ENCODE measurements at regions of chr5 and their contacts with region 1.

Region 1: GRCh38 chr5:54243473-54244080 is 66.8 kb downstream of the ARL15 start:
- DNase-seq: no peak
- H3K4me3 ChIP-seq: no peak overlapping the region
- H3K27ac ChIP-seq: no peak overlapping the region
- H3K4me1 ChIP-seq: no peaks in the 10 kb centered on the region
- H3K27me3 ChIP-seq: no peaks in the 10 kb centered on the region
- CTCF ChIP-seq: peak in 2 of 3 experiments; percentile 64 to 66; a peak in 3 of 4 replicates
- EP300 ChIP-seq: no peak
- POLR2A ChIP-seq: no peak
- RAD21 ChIP-seq: peak; percentile 85 to 86

Region 2: DNA sequence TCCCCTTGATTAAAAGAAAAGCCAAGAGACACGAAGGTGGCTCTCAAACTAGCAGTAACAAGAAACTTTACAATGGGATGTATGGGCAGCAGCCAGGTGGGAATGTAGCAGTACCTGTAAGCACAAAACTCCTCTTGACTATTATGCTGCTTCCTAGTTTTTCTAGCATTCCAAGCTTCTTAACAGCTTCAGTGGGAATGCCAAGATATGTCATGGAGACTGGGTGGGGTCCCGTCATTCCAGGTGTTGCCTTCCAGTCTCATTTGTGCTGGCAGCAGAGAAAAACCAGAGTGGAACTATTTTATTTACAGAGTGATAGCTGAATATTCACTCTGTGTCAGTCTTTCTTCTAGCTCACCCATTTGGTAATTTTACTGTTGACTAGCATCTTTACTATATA is 169.8 kb before region 1 on chr5:
- CTCF ChIA-PET with region 1: no interaction called
- POLR2A ChIA-PET with region 1: no interaction called
- DNase-seq: no peak
- H3K4me3 ChIP-seq: no peak overlapping the region
- H3K27ac ChIP-seq: no peak overlapping the region
- H3K4me1 ChIP-seq: no peaks in the 10 kb centered on the region; a peak in 1 of 7 replicates
- H3K27me3 ChIP-seq: no peaks in the 10 kb centered on the region
- CTCF ChIP-seq: no peak
- EP300 ChIP-seq: no peak
- POLR2A ChIP-seq: no peak
- RAD21 ChIP-seq: no peak

Region 3: GRCh38 chr5:54148067-54148466 is 95.5 kb before region 1 on chr5:
- CTCF ChIA-PET with region 1: no interaction called
- POLR2A ChIA-PET with region 1: no interaction called
- DNase-seq: no peak
- H3K4me3 ChIP-seq: no peak overlapping the region
- H3K27ac ChIP-seq: no peak overlapping the region
- H3K4me1 ChIP-seq: no peaks in the 10 kb centered on the region
- H3K27me3 ChIP-seq: no peaks in the 10 kb centered on the region
- CTCF ChIP-seq: no peak
- EP300 ChIP-seq: no peak
- POLR2A ChIP-seq: no peak
- RAD21 ChIP-seq: no peak

Region 4: DNA sequence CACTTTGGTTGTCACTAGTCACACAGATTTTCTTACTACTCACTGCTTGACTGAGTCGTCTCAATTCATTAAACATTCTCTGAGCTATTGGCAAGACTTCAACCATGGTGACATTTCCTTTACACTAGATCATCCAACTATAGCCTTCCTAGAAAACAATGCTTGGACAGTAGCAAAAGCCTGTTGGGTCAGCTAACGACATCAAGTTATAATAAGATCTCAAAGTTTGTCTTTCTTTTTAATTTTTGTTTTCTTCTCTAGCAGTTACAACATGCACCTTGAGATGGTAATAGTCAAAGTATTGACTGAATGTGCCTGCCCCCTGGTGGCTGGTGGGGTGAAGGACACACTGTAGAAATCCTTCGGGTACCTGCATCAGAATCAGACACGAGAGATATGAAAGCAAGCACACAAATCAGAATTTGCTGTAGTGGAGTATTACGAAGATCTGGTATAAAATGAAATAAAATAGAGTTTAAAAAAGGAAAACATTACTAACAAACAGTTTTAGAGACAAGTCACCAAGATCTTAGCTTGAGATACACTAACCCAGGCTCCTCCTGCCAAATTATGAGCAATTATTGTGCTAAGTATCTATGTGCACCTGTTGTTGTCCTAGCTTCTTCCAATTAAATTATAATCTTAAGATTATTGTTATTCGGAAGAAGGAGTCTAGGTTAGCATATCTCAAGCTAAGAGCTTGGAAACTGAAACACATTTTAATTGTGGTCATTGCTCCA is 14.4 kb before region 1 on chr5:
- CTCF ChIA-PET with region 1: interaction called, 14 read pairs
- POLR2A ChIA-PET with region 1: no interaction called
- DNase-seq: peak in 1 of 2 experiments; percentile 86
- H3K4me3 ChIP-seq: no peak overlapping the region
- H3K27ac ChIP-seq: no peak overlapping the region
- H3K4me1 ChIP-seq: no peaks in the 10 kb centered on the region
- H3K27me3 ChIP-seq: no peaks in the 10 kb centered on the region
- CTCF ChIP-seq: peak; percentile 71 to 80 (median 79)
- EP300 ChIP-seq: no peak
- POLR2A ChIP-seq: no peak
- RAD21 ChIP-seq: peak; percentile 80

Region 5: GRCh38 chr5:54254482-54255198 is 11.1 kb after region 1 on chr5:
- CTCF ChIA-PET with region 1: interaction called, 14 read pairs
- POLR2A ChIA-PET with region 1: interaction called, 3 read pairs
- DNase-seq: no peak
- H3K4me3 ChIP-seq: no peak overlapping the region
- H3K27ac ChIP-seq: no peak overlapping the region
- H3K4me1 ChIP-seq: no peaks in the 10 kb centered on the region; a peak in 1 of 7 replicates
- H3K27me3 ChIP-seq: no peaks in the 10 kb centered on the region
- CTCF ChIP-seq: peak in 2 of 3 experiments; percentile 36 to 48; a peak in 2 of 4 replicates
- EP300 ChIP-seq: no peak
- POLR2A ChIP-seq: no peak
- RAD21 ChIP-seq: peak; percentile 66 to 71

Region 6: GRCh38 chr5:54289777-54290176 is 46.2 kb after region 1 on chr5:
- CTCF ChIA-PET with region 1: no interaction called
- POLR2A ChIA-PET with region 1: no interaction called
- DNase-seq: no peak
- H3K4me3 ChIP-seq: no peak overlapping the region
- H3K27ac ChIP-seq: no peak overlapping the region
- H3K4me1 ChIP-seq: peaks cover 0 to 8% (median 3%) of the 10 kb centered on the region in 4 experiments; a peak in 5 of 7 replicates
- H3K27me3 ChIP-seq: no peaks in the 10 kb centered on the region
- CTCF ChIP-seq: no peak
- EP300 ChIP-seq: no peak
- POLR2A ChIP-seq: no peak
- RAD21 ChIP-seq: no peak

Region 7: DNA sequence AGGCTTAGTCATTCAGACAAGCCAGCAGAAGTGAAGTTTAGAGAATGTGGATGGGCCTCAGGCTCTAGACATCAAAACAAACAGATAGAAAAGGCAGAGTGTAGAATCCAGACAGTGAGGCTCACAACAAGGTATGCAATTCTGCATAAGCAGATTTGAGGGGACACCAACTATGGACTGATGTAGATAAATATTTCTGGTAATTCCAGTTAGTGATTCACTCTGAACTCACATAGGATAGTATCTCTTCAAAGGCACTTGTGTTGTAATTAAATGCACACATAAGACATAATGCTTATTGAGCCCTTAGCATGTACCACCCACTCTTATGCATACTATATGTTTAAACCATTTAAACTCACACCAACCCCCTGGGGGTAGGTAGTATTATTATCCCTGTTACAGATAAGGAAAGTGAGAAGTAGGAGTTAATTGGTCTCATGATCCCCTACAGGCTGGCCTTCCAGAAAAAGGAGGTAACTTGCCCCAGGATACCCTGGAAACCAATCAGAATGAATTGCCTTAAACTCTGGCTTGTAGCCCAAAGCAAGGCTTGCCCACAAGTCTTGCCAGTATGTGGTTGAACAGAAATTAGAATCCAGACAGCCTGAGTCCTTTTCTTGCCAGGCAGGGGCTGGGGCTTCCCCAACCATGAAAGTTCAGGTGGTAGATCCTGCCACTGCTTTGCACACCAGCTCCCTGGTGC is 172.5 kb after region 1 on chr5:
- CTCF ChIA-PET with region 1: interaction called, 17 read pairs
- POLR2A ChIA-PET with region 1: interaction called, 4 read pairs
- DNase-seq: no peak
- H3K4me3 ChIP-seq: no peak overlapping the region
- H3K27ac ChIP-seq: no peak overlapping the region
- H3K4me1 ChIP-seq: no peaks in the 10 kb centered on the region
- H3K27me3 ChIP-seq: no peaks in the 10 kb centered on the region
- CTCF ChIP-seq: no peak
- EP300 ChIP-seq: no peak
- POLR2A ChIP-seq: no peak
- RAD21 ChIP-seq: no peak

Region 8: GRCh38 chr5:54443270-54443669 is 199.7 kb after region 1 on chr5:
- CTCF ChIA-PET with region 1: interaction called, 11 read pairs
- POLR2A ChIA-PET with region 1: no interaction called
- DNase-seq: no peak
- H3K4me3 ChIP-seq: no peak overlapping the region
- H3K27ac ChIP-seq: no peak overlapping the region
- H3K4me1 ChIP-seq: no peaks in the 10 kb centered on the region
- H3K27me3 ChIP-seq: no peaks in the 10 kb centered on the region
- CTCF ChIP-seq: peak in 2 of 3 experiments; percentile 47 to 58; a peak in 2 of 4 replicates
- EP300 ChIP-seq: no peak
- POLR2A ChIP-seq: no peak
- RAD21 ChIP-seq: peak; percentile 49 to 55

Region 9: DNA sequence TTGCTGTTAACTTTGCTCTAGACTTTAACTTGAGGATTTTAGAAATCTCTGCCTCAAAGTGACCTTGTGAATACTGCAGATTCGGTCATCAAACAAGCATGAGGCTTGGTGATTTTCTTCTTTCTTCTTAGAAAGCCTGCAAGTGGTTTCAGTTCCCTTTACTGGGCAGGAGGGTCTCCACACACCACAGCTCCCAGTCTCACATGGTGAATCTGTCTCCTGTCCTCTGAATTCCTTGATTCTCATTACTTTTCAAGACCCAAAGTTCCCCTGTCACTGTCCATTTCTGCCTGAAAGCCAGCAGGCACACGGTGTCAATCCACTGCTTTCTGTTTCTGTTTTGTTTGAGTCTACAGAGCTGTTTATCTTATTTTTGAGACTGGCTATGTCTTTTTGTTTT is 226.0 kb after region 1 on chr5:
- CTCF ChIA-PET with region 1: interaction called, 11 read pairs
- POLR2A ChIA-PET with region 1: no interaction called
- DNase-seq: no peak
- H3K4me3 ChIP-seq: no peak overlapping the region
- H3K27ac ChIP-seq: no peak overlapping the region
- H3K4me1 ChIP-seq: no peaks in the 10 kb centered on the region
- H3K27me3 ChIP-seq: no peaks in the 10 kb centered on the region
- CTCF ChIP-seq: no peak
- EP300 ChIP-seq: no peak
- POLR2A ChIP-seq: no peak
- RAD21 ChIP-seq: no peak

Region 10: DNA sequence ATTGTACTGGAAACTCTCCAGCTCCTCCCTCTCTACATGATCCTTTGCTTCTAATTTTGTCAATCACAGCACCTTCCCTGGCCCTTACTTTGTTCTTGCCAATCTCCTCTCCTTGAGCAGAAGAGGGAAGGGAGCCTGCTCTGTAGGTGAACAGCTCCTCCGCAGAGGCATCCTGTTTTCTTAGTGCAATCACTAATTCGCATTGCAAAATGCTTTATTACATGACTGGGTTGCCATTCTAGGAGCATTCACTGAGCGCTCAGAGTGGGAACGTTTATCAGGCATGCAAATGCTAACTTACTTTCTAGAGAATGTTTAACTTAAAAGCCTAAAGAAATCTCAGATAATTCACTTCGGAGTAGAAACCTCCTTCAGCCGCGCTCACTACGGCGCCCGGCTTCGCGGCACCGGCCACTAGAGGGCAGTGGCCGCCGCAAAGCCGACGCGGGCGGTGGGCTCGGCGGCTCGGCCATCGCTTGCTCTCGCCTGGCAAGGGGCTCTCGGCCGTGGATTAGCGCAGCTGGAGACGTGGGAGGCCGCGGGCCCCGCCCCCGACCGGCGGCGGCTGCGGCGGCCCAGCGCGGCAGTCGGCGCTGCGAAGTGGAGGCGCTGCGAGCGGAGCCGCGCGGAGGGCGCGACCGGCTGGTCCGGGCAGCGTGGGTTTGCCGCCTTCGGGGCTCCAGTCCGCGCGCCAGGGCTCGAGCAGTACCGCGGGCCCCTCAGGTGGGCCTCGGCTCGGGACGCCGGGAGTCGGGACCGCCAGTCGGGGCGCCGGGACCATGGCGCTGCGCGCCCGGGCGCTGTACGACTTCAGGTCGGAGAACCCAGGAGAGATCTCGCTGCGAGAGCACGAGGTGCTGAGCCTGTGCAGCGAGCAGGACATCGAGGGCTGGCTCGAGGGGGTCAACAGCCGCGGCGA is 273.9 kb after region 1 on chr5 and contains the start of gene SNX18:
- CTCF ChIA-PET with region 1: interaction called, 13 read pairs
- POLR2A ChIA-PET with region 1: interaction called, 3 read pairs
- DNase-seq: peak; percentile 71 to 91
- H3K4me3 ChIP-seq: peak within 1 kb of the TSS; percentile 44 to 75 (median 58)
- H3K27ac ChIP-seq: 0 out of 2 replicates have a peak within 1 kb of the TSS, but pooled peaks have one; percentile 28
- H3K4me1 ChIP-seq: peaks cover 0 to 13% (median 9%) of the 10 kb centered on the region in 4 experiments; a peak in 5 of 7 replicates
- H3K27me3 ChIP-seq: peaks cover 0 to 16% (median 12%) of the 10 kb centered on the region in 4 experiments; a peak in 5 of 7 replicates
- CTCF ChIP-seq: peak; percentile 81 to 97 (median 86)
- EP300 ChIP-seq: peak in 1 of 2 experiments; percentile 77; a peak in 1 of 3 replicates
- POLR2A ChIP-seq: peak in 1 of 2 experiments; percentile 56; a peak in 1 of 3 replicates
- RAD21 ChIP-seq: peak; percentile 91 to 97
- total RNA-seq, gene SNX18: 17.3 and 17.7 TPM in 2 replicates

Measured in H1 (cell line).